BJ (cell line): ENCODE measurements at regions of chr11 and their contacts with region 1.

Region 1: DNA sequence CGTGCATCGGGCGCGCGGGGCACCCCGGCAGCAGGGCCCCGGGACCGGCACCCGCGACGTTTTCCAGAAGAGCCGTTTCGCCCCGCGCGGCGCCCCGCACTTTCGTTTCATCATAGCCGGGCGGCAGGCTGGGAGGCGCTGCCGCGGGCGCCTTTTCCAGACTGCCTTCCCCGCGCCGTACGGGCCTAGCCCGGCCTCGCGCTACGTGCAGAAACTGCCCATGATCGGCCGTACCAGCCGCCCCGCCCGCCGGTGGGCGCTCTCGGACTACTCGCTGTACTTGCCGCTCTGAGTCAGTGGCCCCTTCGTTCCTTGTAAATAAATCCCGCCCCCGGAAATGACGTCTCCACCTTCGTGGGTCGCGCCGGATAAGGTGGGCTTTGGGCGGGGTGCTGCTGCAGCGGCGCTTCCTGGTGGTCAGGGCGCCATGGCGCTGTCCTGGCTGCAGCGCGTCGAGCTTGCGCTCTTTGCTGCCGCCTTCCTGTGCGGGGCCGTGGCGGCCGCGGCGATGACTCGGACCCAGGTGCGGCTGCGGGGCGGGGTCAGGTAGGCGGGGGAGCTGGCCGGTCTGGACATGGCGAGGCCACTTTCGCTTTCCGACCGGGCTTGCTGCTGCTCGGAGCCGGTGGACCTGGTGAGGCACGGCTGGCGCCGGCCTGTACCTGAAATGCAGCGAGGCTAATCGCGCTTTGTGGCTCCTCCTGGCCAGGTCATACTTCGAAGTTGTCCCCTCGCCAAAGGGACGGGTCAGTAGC is at the start of gene TMEM179B:
- DNase-seq: peak; percentile 82
- H3K4me3 ChIP-seq: peak within 1 kb of the TSS; percentile 69
- H3K27me3 ChIP-seq: no peaks in the 10 kb centered on the region
- CTCF ChIP-seq: peak; percentile 82
- polyA plus RNA-seq, gene TMEM179B: 76.2 and 97.1 TPM in 2 replicates

Region 2: GRCh38 chr11:62143727-62144126 is 643.5 kb before region 1 on chr11:
- CTCF ChIA-PET with region 1: no interaction called
- POLR2A ChIA-PET with region 1: no interaction called
- DNase-seq: no peak
- H3K4me3 ChIP-seq: no peak overlapping the region
- H3K27me3 ChIP-seq: no peaks in the 10 kb centered on the region
- CTCF ChIP-seq: no peak

Region 3: GRCh38 chr11:62771144-62772021 is 15.8 kb before region 1 on chr11 and contains the start of gene TAF6L:
- CTCF ChIA-PET with region 1: interaction called, 122 read pairs
- POLR2A ChIA-PET with region 1: no interaction called
- DNase-seq: peak; percentile 80
- H3K4me3 ChIP-seq: peak within 1 kb of the TSS; percentile 69
- H3K27me3 ChIP-seq: no peaks in the 10 kb centered on the region
- CTCF ChIP-seq: no peak
- polyA plus RNA-seq, gene TAF6L: 9.1 and 17.0 TPM in 2 replicates

Region 4: GRCh38 chr11:62805076-62805892 is 18.1 kb after region 1 on chr11 and contains the start of gene NXF1:
- CTCF ChIA-PET with region 1: interaction called, 16 read pairs
- POLR2A ChIA-PET with region 1: no interaction called
- DNase-seq: peak; percentile 65
- H3K4me3 ChIP-seq: peak within 1 kb of the TSS; percentile 77
- H3K27me3 ChIP-seq: no peaks in the 10 kb centered on the region
- CTCF ChIP-seq: peak; percentile 15; the same call in 1 of the 2 replicates
- polyA plus RNA-seq, gene NXF1: 37.8 and 51.0 TPM in 2 replicates

Region 5: DNA sequence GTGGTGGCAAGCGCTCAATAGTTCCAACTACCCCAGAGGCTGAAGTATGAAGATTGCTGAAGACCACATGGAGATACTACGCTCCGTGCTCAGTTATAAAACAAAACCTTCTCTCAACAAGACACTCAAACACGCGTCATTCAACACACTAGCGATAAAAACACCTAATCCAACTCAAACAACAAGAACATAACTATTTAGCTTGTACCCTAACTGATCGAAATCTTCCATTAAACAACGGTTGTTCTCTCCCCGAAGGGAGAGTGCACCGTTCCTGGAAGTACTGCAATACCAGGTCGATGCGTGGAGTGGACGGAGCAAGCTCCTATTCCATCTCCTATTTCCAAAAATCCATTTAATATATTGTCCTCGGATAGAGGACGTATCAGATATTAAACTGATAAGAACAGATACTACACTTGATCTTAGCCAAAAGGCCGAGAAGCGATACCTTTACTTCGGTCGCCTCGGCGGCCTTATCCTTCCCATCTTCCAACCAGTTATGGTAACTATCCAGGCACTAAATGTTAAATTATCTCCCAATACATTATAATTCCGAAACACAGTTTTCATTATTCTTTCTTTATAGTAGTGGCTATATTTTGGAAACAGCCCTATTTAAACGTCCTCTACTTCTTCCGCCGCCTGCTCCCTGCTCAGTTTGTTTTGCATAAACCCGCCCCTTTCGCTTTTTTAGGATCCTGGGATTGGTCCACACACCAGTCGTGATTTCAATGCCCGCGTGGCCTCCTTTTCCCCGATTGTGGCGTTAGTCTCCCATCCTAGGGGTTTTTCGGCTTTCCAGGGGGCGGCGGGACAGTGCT is 54.4 kb after region 1 on chr11:
- CTCF ChIA-PET with region 1: interaction called, 7 read pairs
- POLR2A ChIA-PET with region 1: interaction called, 13 read pairs
- DNase-seq: peak; percentile 100
- H3K4me3 ChIP-seq: peak overlapping the region; percentile 34
- H3K27me3 ChIP-seq: no peaks in the 10 kb centered on the region
- CTCF ChIP-seq: no peak

Region 6: DNA sequence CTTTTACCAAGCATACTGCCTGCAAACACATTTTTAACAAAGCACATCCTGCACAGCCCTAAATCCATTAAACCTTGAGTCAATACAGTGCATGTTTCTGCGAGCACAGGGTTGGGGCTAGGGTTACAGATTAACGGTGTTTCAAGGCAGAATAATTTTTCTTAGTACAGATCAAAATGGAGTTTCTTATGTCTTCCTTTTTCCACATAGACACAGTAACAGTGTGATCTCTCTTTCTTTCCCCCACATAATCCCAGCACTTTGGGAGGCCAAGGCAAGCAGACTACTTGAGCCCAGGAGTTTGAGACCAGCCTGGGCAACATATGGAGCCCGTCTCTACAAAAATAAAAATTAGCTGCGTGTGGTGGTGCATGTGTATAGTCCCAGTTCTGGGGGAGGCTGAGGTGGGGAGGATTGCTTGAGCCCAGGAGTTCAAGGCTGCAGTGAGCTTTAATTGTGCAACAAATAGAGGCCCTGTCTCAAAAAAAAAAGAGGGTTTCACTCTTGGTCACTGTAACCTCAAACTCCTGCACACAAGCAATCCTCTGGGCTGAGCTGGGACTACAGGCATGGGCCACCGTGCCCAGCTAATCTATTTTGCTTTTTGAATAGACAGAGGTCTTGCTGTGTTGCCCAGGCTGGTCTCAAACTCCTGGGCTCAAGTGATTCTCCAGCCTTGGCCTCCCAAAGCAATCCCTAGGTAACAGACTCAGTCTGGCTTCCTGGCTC is 73.8 kb after region 1 on chr11:
- CTCF ChIA-PET with region 1: interaction called, 76 read pairs
- POLR2A ChIA-PET with region 1: no interaction called
- DNase-seq: no peak
- H3K4me3 ChIP-seq: no peak overlapping the region
- H3K27me3 ChIP-seq: no peaks in the 10 kb centered on the region
- CTCF ChIP-seq: no peak

Region 7: DNA sequence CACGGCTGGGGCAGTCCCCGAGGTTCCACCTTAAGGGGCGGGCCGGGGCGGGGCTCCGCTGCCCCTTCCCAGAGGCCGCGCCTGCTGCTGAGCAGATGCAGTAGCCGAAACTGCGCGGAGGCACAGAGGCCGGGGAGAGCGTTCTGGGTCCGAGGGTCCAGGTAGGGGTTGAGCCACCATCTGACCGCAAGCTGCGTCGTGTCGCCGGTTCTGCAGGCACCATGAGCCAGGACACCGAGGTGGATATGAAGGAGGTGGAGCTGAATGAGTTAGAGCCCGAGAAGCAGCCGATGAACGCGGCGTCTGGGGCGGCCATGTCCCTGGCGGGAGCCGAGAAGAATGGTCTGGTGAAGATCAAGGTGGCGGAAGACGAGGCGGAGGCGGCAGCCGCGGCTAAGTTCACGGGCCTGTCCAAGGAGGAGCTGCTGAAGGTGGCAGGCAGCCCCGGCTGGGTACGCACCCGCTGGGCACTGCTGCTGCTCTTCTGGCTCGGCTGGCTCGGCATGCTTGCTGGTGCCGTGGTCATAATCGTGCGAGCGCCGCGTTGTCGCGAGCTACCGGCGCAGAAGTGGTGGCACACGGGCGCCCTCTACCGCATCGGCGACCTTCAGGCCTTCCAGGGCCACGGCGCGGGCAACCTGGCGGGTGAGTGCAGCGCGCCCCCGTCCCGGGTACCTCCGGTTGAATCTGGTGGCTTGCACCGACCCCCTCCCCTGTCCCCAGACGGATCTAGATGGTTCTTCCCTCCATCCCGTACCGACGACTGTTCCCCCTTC is 93.8 kb after region 1 on chr11 and contains the start of gene SLC3A2:
- CTCF ChIA-PET with region 1: interaction called, 43 read pairs
- POLR2A ChIA-PET with region 1: no interaction called
- DNase-seq: peak; percentile 45
- H3K4me3 ChIP-seq: peak within 1 kb of the TSS; percentile 98
- H3K27me3 ChIP-seq: no peaks in the 10 kb centered on the region
- CTCF ChIP-seq: peak; percentile 78
- polyA plus RNA-seq, gene SLC3A2: 394 and 535 TPM in 2 replicates